ENCODE measurements at regions of chr5 and their contacts with region 1.

Region 1: GRCh38 chr5:118791926-118792734 is 196.2 kb downstream of the DTWD2 start:
- DNase-seq: peak; percentile 65
- ATAC-seq: peak; percentile 90
- H3K4me3 ChIP-seq: no peak overlapping the region; the same call in 1 of the 2 replicates
- H3K27ac ChIP-seq: no peak overlapping the region
- H3K4me1 ChIP-seq: no peaks in the 10 kb centered on the region
- H3K27me3 ChIP-seq: no peaks in the 10 kb centered on the region
- CTCF ChIP-seq: peak; percentile 72

Region 2: DNA sequence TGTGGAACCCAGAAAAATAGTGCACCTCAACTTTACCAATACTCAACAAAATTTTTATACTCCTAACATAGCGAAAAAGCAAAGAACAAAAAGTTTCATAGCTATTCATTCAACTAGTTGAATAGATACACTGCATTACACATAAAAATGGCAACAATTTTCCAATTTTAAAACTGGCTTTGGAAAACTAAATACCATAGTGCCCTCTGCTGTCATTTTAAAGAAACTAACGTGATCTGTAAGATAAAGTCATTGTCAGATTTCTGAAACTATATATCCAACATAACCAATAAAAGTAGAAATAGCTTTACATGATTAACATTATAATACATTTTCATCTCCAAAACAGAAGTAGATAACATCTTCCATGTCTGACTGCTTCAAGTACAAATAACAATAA is 164.6 kb after region 1 on chr5:
- CTCF ChIA-PET with region 1: no interaction called
- POLR2A ChIA-PET with region 1: no interaction called
- intact Hi-C with region 1: loop called (anchors 1 kb)
- DNase-seq: peak; percentile 45
- ATAC-seq: peak; percentile 54; the same call in 1 of the 2 replicates
- H3K4me3 ChIP-seq: no peak overlapping the region
- H3K27ac ChIP-seq: no peak overlapping the region
- H3K4me1 ChIP-seq: no peaks in the 10 kb centered on the region
- H3K27me3 ChIP-seq: no peaks in the 10 kb centered on the region
- CTCF ChIP-seq: peak; percentile 67

Measured in PC-3 (cell line).